Activated CD4-positive, alpha-beta T cell treated with anti-CD3 and anti-CD28 coated beads for 36 hours (primary cell): ENCODE measurements at regions of chrX and their contacts with region 1.

Region 1: DNA sequence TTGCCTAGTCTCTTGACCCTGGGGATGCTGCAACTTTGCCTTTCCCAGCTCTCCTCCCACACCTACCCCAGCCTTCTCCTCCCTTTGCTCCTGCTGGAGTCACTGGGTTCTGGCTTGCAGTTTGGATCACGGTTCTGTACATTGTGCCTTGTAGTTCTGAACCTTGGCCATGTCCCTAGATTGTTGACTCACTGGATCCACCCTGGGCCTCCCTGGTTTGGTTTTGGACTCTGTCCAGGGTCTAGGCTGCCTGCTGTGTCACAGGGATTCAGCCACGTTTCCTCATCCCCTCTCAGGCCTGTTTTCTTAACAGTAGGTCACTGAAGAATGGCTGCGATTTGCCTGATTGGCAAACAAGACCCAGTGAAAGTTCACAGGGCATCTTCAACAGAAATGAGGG is 11.5 kb upstream of the GABRE start:
- DNase-seq: no peak
- ATAC-seq: no peak
- H3K4me3 Mint-ChIP-seq: no peak overlapping the region
- H3K27ac Mint-ChIP-seq: no peak overlapping the region
- H3K4me1 Mint-ChIP-seq: no peaks in the 10 kb centered on the region
- H3K27me3 Mint-ChIP-seq: no peaks in the 10 kb centered on the region

Region 2: GRCh38 chrX:151523351-151523750 is 462.6 kb before region 1 on chrX:
- CTCF ChIA-PET with region 1: no interaction called
- POLR2A ChIA-PET with region 1: no interaction called
- intact Hi-C with region 1: loop called in 1 of 2 experiments (anchors 5 kb)
- DNase-seq: no peak
- ATAC-seq: no peak
- H3K4me3 Mint-ChIP-seq: no peak overlapping the region
- H3K27ac Mint-ChIP-seq: no peak overlapping the region
- H3K4me1 Mint-ChIP-seq: no peaks in the 10 kb centered on the region
- H3K27me3 Mint-ChIP-seq: peaks cover 6% of the 10 kb centered on the region